GM13976 (cell line): ENCODE measurements at regions of chr10 and their contacts with region 1.

Region 1: DNA sequence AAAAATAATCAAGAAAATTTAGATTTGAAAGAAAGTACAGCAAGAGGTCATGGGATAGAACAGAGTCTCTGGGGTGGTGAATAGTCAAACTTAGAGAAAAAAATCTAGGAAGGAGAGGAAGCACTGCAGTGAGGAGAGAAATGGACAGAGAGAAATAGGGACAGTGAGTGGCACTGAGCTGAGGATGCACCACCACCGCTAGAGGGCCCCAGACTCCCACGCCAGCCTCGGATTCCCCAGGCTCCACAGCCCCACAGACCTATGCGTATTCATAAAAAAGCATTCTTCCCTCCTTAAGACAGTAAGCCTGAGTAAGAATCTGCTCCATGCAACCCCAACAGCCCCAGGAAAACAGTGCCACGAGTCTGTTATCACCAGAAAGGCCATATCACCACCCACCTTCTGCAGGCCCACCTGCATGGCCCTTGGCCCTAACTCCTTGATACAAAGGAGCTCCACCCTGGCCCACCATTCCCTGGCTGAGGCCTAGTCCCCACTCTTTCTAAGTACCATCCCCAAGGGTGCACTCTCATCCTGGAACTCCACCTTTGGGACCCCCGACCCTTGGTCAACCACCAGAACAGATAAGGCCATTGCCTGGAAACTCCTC is 91.0 kb downstream of the ALOX5 start:
- DNase-seq: peak; percentile 82
- CTCF ChIP-seq: peak; percentile 87

Region 2: DNA sequence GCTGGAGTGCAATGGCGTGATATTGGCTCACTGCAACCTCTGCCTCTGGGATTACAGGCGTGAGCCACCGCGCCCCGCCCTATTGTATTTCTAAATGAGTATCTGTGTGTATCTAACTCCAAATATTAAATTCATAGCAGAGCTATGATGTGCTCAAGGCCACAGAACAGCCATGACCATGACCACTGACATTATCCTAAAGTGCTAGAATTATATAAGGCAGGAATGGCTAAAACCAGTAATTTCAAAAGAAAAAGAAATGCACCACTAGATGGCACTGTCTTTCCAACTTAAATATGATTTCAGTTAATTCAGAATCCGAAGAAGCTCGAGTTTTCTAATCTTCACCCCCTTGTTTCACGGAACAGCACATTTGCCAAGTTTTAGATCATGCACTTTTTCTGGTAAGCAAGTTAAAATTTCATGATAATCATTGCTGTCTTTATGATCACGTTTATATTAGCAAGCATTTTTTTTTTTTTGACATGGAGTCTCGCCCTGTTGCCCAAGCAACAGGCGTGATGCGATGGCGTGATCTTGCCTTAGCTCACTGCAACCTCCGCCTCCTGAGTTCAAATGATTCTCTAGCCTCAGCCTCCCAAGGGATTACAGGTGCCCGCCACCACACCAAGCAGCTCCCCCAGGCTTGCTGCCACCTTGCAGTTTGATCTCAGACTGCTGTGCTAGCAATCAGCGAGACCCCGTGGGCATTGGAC is 214.9 kb before region 1 on chr10:
- in situ Hi-C with region 1: loop called (anchors 10 kb)
- DNase-seq: peak; percentile 43
- CTCF ChIP-seq: peak; percentile 23

Region 3: DNA sequence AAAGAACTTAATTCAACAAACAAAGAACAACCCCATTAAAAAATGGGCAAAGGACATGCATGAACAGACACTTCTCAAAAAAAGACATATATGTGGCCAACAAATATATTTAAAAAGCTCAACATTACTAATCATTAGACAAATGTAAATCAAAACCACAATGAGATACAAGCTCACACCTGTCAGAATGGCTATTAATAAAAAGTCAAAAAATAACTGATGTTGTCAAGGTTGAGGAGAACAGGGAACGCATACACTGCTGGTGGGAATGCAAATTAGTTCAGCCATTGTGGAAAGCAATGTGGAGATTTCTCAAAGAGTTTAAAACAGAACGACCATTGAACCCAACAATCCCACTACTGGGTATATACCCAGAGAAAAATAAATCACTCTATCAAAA is 188.4 kb after region 1 on chr10:
- in situ Hi-C with region 1: no loop called
- DNase-seq: no peak
- CTCF ChIP-seq: no peak

Region 4: GRCh38 chr10:45672181-45673073 is 207.4 kb after region 1 on chr10 and contains the start of gene ZFAND4:
- in situ Hi-C with region 1: loop called (anchors 10 kb)
- DNase-seq: peak; percentile 99
- CTCF ChIP-seq: peak; percentile 91